ENCODE measurements at regions of chr2 and their contacts with region 1.

Region 1: DNA sequence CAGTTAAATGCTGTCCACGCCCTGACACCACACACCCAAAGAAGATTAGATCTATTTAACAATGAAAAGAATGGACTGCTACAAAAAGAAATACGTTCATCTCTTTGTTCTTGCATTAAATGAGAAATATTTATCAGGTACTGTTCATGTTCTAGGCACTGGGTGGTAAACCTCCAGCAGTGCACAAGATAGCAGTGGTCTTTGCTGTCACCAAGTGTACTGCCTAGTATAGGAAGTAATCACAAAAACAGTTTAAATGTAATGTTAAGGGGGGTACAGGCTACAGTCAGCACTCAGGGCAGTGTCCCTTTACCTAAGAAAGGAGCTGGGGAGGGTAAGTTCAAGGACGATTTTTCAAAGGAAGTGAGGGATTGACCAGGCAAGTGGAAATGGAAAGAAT is 443.6 kb downstream of the PARD3B start:
- DNase-seq: no peak
- ATAC-seq: no peak
- H3K4me3 ChIP-seq: no peak overlapping the region
- H3K4me3 Mint-ChIP-seq: no peak overlapping the region
- H3K27ac ChIP-seq: no peak overlapping the region
- H3K27ac Mint-ChIP-seq: no peak overlapping the region
- H3K4me1 ChIP-seq: no peaks in the 10 kb centered on the region
- H3K4me1 Mint-ChIP-seq: peaks cover 5% of the 10 kb centered on the region
- H3K27me3 ChIP-seq: no peaks in the 10 kb centered on the region
- H3K27me3 Mint-ChIP-seq: no peaks in the 10 kb centered on the region
- CTCF ChIP-seq: no peak

Region 2: DNA sequence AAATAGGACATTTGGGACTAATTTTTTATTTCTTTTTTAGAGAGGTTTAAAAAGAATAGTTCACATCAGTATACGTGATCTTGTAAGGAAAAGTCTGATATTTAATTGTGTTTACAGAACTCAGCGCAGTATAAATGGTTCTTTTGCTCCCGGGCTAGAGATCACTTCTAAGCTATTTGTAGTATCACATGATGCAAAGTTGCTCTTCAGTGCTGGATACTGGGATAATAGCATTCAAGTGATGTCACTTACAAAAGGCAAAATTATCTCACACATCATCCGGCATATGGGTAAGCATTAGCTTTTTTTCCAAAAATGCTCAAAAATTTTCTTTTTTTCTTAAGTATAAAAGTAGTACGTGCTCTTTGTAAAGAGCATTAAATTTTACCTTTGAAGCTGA is 1787.4 kb before region 1 on chr2:
- CTCF ChIA-PET with region 1: no interaction called
- POLR2A ChIA-PET with region 1: no interaction called
- intact Hi-C with region 1: no loop called
- DNase-seq: no peak
- ATAC-seq: no peak
- H3K4me3 ChIP-seq: no peak overlapping the region
- H3K4me3 Mint-ChIP-seq: no peak overlapping the region
- H3K27ac ChIP-seq: no peak overlapping the region
- H3K27ac Mint-ChIP-seq: no peak overlapping the region
- H3K4me1 ChIP-seq: no peaks in the 10 kb centered on the region
- H3K4me1 Mint-ChIP-seq: no peaks in the 10 kb centered on the region
- H3K27me3 ChIP-seq: no peaks in the 10 kb centered on the region
- H3K27me3 Mint-ChIP-seq: no peaks in the 10 kb centered on the region
- CTCF ChIP-seq: no peak

Region 3: DNA sequence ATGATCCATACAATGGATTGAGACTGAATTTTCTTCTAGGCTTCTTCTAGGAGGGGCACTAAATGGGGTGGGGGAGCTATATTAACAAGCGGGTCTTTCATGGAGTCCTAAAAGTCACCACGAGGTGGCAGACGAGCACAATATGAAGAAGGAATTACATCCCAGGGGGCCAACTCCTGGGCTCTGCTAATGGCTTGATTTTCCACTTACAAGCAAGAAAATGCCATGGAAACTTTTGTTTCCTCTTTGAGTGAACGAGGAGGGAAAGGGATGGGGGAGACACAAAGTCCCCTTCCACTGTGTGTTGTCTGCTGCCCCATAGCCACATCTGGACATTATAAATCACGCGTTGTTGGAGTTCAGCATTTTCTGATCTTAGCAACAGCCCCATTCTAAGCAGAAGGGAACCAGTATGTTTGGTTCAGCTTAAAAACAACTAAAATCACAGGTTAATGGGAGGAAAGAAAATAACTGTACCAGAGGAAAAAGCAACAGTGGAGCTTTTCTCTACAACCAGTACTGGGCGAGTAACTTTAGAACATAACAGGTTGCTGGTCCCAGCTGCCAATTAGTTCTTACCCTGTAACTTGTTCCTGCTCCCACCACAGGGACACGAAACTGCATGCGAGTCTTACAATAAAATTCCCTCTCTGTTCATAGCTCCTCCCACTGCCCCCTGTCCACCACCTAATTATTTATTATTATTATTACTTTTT is 728.5 kb before region 1 on chr2:
- CTCF ChIA-PET with region 1: no interaction called
- POLR2A ChIA-PET with region 1: no interaction called
- intact Hi-C with region 1: loop called in 1 of 2 experiments (anchors 5 kb)
- DNase-seq: peak in 6 of 9 experiments; percentile 33 to 58 (median 40)
- ATAC-seq: peak; percentile 62
- H3K4me3 ChIP-seq: no peak overlapping the region
- H3K4me3 Mint-ChIP-seq: no peak overlapping the region
- H3K27ac ChIP-seq: no peak overlapping the region
- H3K27ac Mint-ChIP-seq: no peak overlapping the region
- H3K4me1 ChIP-seq: no peaks in the 10 kb centered on the region
- H3K4me1 Mint-ChIP-seq: peaks cover 2% of the 10 kb centered on the region
- H3K27me3 ChIP-seq: peaks cover 0 to 2% of the 10 kb centered on the region in 2 experiments
- H3K27me3 Mint-ChIP-seq: peaks cover 29% of the 10 kb centered on the region
- CTCF ChIP-seq: peak; percentile 60

Region 4: DNA sequence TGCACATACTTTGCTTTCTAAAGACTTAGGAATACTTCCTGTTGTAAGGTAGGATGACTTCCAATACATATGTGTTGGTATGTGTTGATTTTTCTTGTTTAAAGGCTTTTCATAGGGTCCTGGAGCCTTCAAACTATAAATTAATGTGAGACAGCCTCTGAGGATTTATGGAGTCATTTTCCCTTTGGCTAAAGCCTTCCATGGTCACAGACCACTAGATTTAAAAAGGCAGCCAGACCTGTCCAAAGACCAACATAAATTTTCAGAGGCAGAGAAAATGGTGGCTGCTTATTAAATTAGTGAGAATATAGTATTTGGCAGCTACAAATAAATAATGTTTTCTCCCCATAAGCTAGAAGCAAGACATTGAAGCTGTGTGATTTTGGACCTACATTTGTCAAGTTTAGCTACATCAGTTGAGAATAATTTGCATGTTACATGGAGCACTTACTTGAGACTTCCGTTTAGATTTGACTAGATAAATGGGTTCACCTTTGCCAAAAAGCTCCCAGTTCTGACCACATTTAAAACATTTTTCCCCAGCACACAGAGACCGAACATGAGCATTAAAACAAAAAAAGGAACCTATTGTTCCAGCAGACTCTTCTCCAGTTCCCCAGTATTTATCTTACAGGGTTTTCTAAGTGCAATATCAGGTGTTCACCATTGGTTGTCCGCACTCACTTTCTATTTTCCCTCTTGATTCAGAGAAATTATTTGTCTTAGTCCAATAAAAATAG is 40.6 kb before region 1 on chr2:
- CTCF ChIA-PET with region 1: no interaction called
- POLR2A ChIA-PET with region 1: no interaction called
- intact Hi-C with region 1: no loop called
- DNase-seq: peak in 1 of 9 experiments; percentile 13
- ATAC-seq: no peak
- H3K4me3 ChIP-seq: no peak overlapping the region
- H3K4me3 Mint-ChIP-seq: peak overlapping the region; percentile 42
- H3K27ac ChIP-seq: no peak overlapping the region
- H3K27ac Mint-ChIP-seq: peak overlapping the region; percentile 81
- H3K4me1 ChIP-seq: peaks cover 19% of the 10 kb centered on the region
- H3K4me1 Mint-ChIP-seq: peaks cover 35% of the 10 kb centered on the region
- H3K27me3 ChIP-seq: no peaks in the 10 kb centered on the region
- H3K27me3 Mint-ChIP-seq: no peaks in the 10 kb centered on the region
- CTCF ChIP-seq: no peak

Measured in CD8-positive, alpha-beta T cell (primary cell).